Activated CD8-positive, alpha-beta T cell treated with anti-CD3 and anti-CD28 coated beads, Interleukin-2, amount 10 ng/mL, durations not matched to agents 7 days and 5 days (primary cell): ENCODE measurements at regions of chr9 and their contacts with region 1.

Region 1: GRCh38 chr9:130029223-130029973 is 13.6 kb downstream of the FNBP1 start:
- DNase-seq: peak; percentile 41
- ATAC-seq: peak; percentile 26
- H3K4me3 Mint-ChIP-seq: peak overlapping the region; percentile 32
- H3K27ac Mint-ChIP-seq: peak overlapping the region; percentile 78
- H3K4me1 Mint-ChIP-seq: peaks cover 91% of the 10 kb centered on the region
- H3K27me3 Mint-ChIP-seq: no peaks in the 10 kb centered on the region

Region 2: DNA sequence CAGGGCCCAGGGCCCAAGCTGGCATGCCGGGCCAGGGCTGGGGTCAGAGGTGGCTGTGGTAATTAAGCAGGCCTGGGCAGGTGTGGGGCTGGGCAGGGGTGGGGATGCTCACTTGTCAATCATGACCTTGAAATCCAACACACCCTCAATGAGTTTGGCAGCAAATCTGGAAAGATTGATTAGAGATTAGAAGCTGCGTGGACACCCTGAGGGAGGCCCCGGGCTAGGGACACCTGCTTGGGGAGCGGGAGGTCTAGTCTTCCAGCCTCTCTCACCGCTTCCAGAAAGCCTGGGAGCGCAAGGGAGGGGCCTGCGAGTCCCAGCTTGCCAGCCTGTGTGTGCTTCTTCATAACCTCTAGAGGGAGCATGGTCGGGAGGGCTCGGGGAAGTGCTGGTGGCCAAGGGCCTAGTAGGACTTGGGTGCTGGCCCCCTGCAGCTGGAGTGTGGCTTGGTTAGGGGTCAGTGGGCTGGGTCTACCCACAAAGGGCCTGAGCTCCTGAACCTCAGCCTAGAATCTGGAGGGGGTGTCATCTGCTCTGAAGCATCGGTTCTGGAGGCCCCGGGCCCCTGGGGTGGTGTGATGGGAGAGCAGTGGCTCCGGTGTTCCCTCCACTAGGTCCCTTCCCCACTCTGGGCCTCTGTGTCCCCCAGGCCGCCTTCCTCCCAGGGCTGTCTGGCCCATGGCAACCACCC is 926.4 kb before region 1 on chr9:
- CTCF ChIA-PET with region 1: no interaction called
- POLR2A ChIA-PET with region 1: no interaction called
- DNase-seq: peak; percentile 37
- ATAC-seq: no peak
- H3K4me3 Mint-ChIP-seq: no peak overlapping the region
- H3K27ac Mint-ChIP-seq: no peak overlapping the region
- H3K4me1 Mint-ChIP-seq: no peaks in the 10 kb centered on the region
- H3K27me3 Mint-ChIP-seq: no peaks in the 10 kb centered on the region

Region 3: DNA sequence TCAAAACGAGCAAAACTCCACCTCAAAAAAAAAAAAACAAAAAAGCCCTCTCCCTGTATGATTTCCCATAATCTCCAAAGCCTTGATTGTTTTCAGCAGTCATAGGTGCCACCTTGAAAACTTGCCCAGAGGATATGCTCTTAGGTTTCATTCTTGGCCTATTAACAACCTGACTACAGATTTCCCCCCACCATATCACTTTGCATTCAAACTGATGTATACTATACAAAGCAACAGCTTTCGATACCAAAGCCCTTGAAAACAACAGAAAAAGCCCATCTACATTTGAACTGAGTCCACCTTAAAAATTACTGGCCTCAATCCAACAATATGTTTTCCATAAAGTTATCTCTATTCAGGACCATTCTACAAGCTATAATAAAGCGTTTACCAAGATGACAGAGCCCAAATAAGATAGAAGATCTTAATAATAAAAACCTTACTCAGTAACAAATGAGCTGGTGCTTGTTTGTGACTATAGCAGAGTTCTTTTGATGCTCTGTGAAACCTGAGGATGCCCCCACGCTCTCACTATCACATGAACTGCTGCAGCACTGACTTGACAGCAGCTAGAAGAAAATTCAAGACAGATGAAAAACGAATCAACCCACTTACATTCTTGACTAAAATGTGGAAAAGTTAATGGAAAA is 30.8 kb before region 1 on chr9:
- CTCF ChIA-PET with region 1: interaction called, 12 read pairs
- POLR2A ChIA-PET with region 1: no interaction called
- DNase-seq: no peak
- ATAC-seq: no peak
- H3K4me3 Mint-ChIP-seq: no peak overlapping the region
- H3K27ac Mint-ChIP-seq: peak overlapping the region; percentile 71
- H3K4me1 Mint-ChIP-seq: peaks cover 70% of the 10 kb centered on the region
- H3K27me3 Mint-ChIP-seq: no peaks in the 10 kb centered on the region

Region 4: DNA sequence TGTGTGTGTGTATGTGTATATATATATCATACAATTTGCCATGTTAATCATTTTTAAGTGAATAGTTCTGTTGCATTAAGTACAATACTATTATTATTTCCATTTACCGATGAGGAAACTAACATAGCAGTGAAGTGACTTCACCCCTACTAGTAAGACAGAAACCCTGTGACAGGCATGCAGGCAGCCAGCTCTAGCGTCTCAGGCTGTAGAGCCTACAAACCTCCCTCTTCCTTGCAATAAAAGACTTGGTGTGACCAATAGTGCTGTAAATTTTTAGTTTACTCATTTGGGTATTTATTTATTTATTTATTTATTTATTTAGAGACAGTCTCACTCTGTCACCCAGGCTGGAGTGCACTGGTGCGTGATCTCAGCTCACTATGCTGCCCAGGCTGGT is 11.1 kb before region 1 on chr9:
- CTCF ChIA-PET with region 1: interaction called, 16 read pairs
- POLR2A ChIA-PET with region 1: interaction called, 5 read pairs
- DNase-seq: no peak
- ATAC-seq: no peak
- H3K4me3 Mint-ChIP-seq: no peak overlapping the region
- H3K27ac Mint-ChIP-seq: no peak overlapping the region
- H3K4me1 Mint-ChIP-seq: peaks cover 56% of the 10 kb centered on the region
- H3K27me3 Mint-ChIP-seq: no peaks in the 10 kb centered on the region

Region 5: DNA sequence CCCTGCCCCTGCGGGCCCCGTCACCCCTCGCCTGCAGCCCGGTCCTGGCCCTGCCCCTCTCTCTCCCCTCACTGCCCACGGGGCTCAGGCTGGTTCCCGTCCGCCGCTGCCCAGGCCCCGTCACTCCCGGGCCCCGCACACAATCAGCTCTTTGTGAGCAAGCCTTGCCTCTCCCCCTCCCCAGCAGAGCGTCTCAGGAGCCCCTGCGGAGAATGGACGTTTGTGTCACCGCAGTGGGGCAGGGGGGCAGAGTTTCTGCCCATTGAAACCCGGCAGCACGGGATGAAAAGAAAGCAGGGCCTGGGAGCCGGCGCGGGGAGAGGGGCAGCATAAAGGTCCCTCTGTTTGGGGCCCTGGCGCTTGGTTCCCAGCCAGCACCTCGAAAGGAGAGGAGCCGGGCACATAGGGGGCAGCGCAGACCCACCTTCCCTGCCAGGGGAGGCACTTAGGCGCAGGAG is 1082.5 kb after region 1 on chr9:
- CTCF ChIA-PET with region 1: no interaction called
- POLR2A ChIA-PET with region 1: no interaction called
- DNase-seq: no peak
- ATAC-seq: no peak
- H3K4me3 Mint-ChIP-seq: no peak overlapping the region
- H3K27ac Mint-ChIP-seq: no peak overlapping the region
- H3K4me1 Mint-ChIP-seq: no peaks in the 10 kb centered on the region
- H3K27me3 Mint-ChIP-seq: peaks cover 2% of the 10 kb centered on the region